Dendritic cell treated with granulocyte-macrophage colony-stimulating factor and Interleukin-4, amounts not matched to agents 40 ng/mL and 50 ng/mL, for 4 days (primary cell): ENCODE measurements at regions of chr3 and their contacts with region 1.

Region 1: GRCh38 chr3:184561061-184561912 is at the start of gene EPHB3:
- H3K4me3 Mint-ChIP-seq: peak within 1 kb of the TSS; percentile 64
- H3K27ac Mint-ChIP-seq: peak within 1 kb of the TSS; percentile 59
- H3K4me1 Mint-ChIP-seq: peaks cover 45% of the 10 kb centered on the region
- H3K27me3 Mint-ChIP-seq: peaks cover 62% of the 10 kb centered on the region

Region 2: DNA sequence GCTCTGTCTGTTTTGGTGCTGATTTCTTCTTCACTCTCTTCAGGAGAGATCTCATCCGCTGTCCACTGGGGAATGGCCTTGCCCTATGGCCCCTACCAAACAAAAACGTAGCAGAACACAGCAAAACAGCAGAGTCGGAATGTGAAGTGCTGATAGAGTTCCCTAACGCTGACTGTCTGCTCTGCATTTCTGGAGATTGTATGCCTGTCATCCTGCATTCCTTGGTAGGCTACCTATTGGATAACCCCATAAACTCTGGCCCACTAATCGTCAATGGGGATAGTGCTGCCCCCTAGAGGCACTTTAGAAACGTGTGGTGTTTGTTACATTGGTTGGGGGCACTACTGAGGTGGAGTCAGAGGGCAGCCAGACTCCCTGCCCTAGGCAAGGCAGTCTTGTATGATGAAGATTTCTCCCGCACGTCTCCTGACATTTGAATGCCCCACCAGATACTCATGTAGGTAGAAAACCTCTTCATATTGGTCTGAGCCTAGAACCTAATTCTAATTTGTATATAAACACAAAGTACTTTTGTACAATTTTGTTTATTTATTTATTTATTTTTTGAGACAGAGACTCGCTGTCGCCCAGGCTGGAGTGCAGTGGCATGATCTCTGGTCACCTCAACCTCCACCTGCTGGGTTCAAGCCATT is 166.2 kb after region 1 on chr3:
- intact Hi-C with region 1: loop called (anchors 1 kb)
- H3K4me3 Mint-ChIP-seq: no peak overlapping the region
- H3K27ac Mint-ChIP-seq: no peak overlapping the region
- H3K4me1 Mint-ChIP-seq: peaks cover 12% of the 10 kb centered on the region
- H3K27me3 Mint-ChIP-seq: peaks cover 7% of the 10 kb centered on the region

Region 3: GRCh38 chr3:184777336-184778004 is 216.2 kb after region 1 on chr3:
- intact Hi-C with region 1: loop called (anchors 1 kb)
- H3K4me3 Mint-ChIP-seq: no peak overlapping the region
- H3K27ac Mint-ChIP-seq: no peak overlapping the region
- H3K4me1 Mint-ChIP-seq: peaks cover 53% of the 10 kb centered on the region
- H3K27me3 Mint-ChIP-seq: peaks cover 26% of the 10 kb centered on the region

Region 4: DNA sequence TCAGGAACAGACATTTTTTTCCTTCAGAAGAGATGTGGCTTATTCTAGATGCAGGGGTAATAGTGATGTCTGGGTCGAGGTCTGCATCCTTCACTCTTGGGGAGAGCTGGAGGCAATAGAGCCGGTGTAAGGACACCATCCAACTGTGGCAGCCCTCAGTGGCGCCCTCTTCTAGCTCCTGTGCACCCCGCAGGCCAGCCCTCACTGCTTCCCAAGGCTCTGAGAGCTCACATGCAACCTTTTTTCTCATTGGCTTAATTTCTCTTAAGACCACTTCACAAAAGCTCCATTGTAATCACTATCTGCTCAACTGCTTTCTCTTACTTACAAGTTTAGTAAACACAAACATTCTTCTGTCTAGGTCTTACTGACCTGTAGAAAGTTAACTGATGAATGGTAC is 246.7 kb after region 1 on chr3:
- intact Hi-C with region 1: loop called (anchors 1 kb)
- H3K4me3 Mint-ChIP-seq: no peak overlapping the region
- H3K27ac Mint-ChIP-seq: no peak overlapping the region
- H3K4me1 Mint-ChIP-seq: peaks cover 50% of the 10 kb centered on the region
- H3K27me3 Mint-ChIP-seq: no peaks in the 10 kb centered on the region